ENCODE measurements at regions of chr1 and their contacts with region 1.

Region 1: DNA sequence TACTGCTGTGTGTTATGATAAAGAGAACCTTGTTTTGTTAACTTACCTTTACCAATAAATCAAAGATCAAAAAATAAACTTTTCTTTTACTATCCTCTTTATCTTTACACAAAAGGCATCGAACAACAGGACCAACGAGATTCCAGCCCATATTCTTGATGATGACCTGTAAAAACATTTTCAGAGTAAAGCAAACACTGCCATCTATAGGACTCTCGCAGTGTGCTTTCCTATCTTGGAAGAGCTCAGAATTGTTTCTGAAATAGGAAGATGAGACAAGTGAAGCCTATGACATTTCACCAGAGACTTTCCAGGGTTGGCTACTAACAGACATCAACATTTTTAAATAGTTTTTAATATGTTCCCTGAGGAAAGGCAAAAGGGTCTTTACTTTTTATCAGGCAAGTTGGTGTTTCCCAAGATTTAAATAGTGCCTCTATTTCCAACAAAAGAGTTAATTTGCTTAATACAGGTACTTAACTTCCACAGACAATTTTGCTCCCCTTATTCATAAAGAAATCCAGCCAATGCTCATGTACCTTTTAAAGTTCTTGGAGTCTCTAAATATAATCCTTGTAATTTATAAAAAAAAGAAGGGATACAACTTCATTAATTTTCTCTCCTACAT is 7.3 kb downstream of the GLMN start:
- DNase-seq: no peak
- ATAC-seq: no peak
- H3K4me3 Mint-ChIP-seq: no peak overlapping the region
- H3K27ac Mint-ChIP-seq: no peak overlapping the region
- H3K4me1 Mint-ChIP-seq: peaks cover 18% of the 10 kb centered on the region
- H3K27me3 Mint-ChIP-seq: no peaks in the 10 kb centered on the region

Region 2: GRCh38 chr1:91997607-91998195 is 293.8 kb before region 1 on chr1:
- CTCF ChIA-PET with region 1: interaction called, 46 read pairs
- POLR2A ChIA-PET with region 1: no interaction called
- DNase-seq: peak; percentile 59
- ATAC-seq: no peak
- H3K4me3 Mint-ChIP-seq: no peak overlapping the region
- H3K27ac Mint-ChIP-seq: no peak overlapping the region
- H3K4me1 Mint-ChIP-seq: no peaks in the 10 kb centered on the region
- H3K27me3 Mint-ChIP-seq: peaks cover 5% of the 10 kb centered on the region

Region 3: DNA sequence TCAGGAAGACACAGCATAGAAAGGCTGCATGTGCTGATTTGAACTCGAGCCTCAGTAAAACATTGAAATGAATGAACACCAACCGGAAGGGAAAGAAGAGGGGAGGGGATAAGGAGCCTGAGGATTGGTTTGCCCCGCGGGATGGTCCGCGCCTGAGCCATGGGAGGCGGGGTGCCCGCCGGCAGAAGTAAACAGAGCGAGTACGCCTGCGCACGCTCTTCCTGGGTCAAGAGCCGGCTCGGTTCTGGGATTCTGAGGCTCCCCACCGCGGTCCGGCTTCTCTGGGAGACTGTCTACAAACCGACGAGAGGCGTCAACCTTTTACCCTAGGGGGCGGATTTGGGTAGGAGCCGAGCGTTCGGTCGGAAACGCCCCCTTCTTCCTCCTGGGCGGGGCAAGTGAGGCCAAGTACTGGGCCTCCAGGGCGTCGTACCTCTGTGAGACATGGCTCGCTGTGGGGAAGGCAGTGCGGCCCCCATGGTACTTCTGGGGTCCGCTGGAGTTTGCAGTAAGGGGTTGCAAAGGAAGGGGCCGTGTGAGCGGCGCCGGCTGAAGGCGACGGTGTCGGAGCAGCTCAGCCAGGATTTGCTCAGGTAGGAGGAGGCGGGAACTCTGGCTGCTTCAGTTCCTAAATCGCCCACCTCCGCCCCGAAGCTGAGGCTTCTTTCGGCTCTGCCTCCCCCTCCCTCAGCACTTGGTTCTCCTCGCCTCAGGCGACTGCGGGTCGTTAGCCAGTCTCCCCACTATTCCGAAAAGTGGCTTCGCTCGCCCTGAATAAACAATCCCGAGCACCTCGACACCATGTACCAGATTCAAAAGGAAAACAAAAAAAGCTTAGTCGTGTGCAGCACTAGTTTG is 211.1 kb before region 1 on chr1 and contains the start of gene BTBD8:
- CTCF ChIA-PET with region 1: interaction called, 10 read pairs
- POLR2A ChIA-PET with region 1: no interaction called
- DNase-seq: peak; percentile 91
- ATAC-seq: peak; percentile 97
- H3K4me3 Mint-ChIP-seq: peak within 1 kb of the TSS; percentile 96
- H3K27ac Mint-ChIP-seq: peak within 1 kb of the TSS; percentile 87
- H3K4me1 Mint-ChIP-seq: peaks cover 12% of the 10 kb centered on the region
- H3K27me3 Mint-ChIP-seq: no peaks in the 10 kb centered on the region
- total RNA-seq, gene BTBD8: 1.5 to 1.6 TPM

Measured in activated CD8-positive, alpha-beta T cell treated with anti-CD3 and anti-CD28 coated beads, Interleukin-2, amount 10 ng/mL, durations not matched to agents 7 days and 5 days (primary cell).